ENCODE measurements at regions of chr10 and their contacts with region 1.

Region 1: DNA sequence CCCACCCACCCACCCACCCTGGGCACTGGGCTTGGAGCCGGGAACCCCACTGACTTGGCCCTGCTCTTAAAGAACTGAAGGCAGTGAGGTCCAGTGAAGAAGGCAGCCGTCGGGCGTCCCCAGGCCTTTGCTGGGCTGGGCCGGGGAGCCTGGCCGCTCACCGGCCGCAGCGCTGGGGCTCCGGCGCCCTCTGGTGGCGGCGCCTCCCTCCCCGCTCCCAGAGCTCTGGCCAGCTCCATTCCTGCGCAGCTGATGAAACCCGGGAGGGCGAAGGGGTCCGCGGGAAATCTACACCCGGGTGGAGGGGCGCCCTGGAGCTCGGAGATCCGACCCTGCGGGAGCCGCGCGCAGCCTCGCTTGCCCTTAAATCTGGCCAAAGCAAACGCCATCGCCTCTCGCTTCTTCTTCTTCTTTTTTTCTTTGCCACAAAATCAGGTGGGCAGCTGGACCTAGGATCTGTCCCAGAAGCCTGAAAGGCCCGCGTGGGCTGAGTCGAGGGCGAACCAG is 1.7 kb upstream of the CXCL12 start:
- DNase-seq: peak; percentile 14
- H3K4me3 ChIP-seq: no peak overlapping the region
- H3K27ac ChIP-seq: no peak overlapping the region
- H3K4me1 ChIP-seq: no peaks in the 10 kb centered on the region
- H3K27me3 ChIP-seq: peaks cover 7% of the 10 kb centered on the region
- CTCF ChIP-seq: peak; percentile 24 to 72

Region 2: DNA sequence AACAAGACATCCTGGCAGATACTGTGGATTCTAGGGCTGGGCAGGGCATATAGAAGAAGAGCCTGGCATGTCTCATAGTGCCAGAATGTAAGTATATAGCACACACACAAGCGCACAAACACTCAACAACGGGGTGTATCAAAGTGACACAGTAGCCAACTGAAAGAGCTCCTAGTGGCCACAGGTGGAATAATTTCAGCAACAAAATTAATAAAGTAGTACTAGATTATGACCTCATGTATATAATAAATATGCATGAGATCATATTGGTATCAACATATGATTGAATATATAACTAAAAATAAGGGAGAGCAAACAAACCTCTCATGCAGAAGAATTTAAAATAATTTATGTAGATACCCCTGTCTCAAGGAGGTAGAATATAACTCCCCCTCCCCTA is 70.7 kb after region 1 on chr10:
- CTCF ChIA-PET with region 1: no interaction called
- dilution Hi-C with region 1: no loop called
- in situ Hi-C with region 1: no loop called
- intact Hi-C with region 1: no loop called
- DNase-seq: no peak
- H3K4me3 ChIP-seq: no peak overlapping the region
- H3K27ac ChIP-seq: no peak overlapping the region
- H3K4me1 ChIP-seq: no peaks in the 10 kb centered on the region
- H3K27me3 ChIP-seq: no peaks in the 10 kb centered on the region
- CTCF ChIP-seq: no peak

Region 3: DNA sequence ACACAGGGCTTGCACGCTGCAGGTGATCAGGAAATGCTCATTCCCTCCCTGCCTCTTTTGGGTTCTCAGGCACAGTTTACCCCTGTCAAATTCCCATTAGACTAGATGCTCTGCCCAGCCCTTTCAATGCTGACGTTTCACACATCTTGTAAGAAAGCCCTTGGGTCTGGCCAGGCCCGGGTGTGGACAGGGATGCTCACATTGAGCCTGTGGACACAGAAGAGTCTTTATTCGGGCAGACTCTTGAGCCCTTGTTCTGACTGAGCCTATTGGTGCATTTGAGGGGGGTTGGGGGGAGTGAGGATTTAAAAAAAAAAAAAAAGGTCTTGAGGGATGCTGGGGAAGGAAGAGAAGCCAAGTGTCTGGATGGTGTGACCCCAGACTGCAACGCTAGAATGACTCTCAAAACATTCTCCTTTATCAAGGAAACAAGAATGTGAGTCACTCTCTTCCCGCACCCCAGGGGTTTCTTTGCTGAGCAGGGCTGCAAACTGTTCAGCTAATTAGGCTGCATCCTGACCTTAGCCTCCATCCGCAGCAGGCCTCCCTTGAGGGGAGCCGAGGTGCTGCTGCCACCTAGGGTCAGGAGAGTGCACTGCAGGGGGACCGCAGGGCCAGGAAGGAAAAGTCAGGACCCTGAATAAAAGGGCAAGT is 470.9 kb after region 1 on chr10:
- CTCF ChIA-PET with region 1: no interaction called
- dilution Hi-C with region 1: no loop called
- in situ Hi-C with region 1: no loop called
- intact Hi-C with region 1: loop called (anchors 2 kb)
- DNase-seq: peak; percentile 14
- H3K4me3 ChIP-seq: no peak overlapping the region
- H3K27ac ChIP-seq: no peak overlapping the region
- H3K4me1 ChIP-seq: no peaks in the 10 kb centered on the region
- H3K27me3 ChIP-seq: no peaks in the 10 kb centered on the region
- CTCF ChIP-seq: peak; percentile 95 to 98

Region 4: GRCh38 chr10:44864637-44865288 is 478.2 kb after region 1 on chr10:
- CTCF ChIA-PET with region 1: no interaction called
- dilution Hi-C with region 1: no loop called
- in situ Hi-C with region 1: no loop called
- intact Hi-C with region 1: loop called (anchors 2 kb)
- DNase-seq: peak; percentile 69
- H3K4me3 ChIP-seq: peak overlapping the region; percentile 24 to 62 (median 58)
- H3K27ac ChIP-seq: no peak overlapping the region
- H3K4me1 ChIP-seq: peaks cover 15% of the 10 kb centered on the region
- H3K27me3 ChIP-seq: no peaks in the 10 kb centered on the region
- CTCF ChIP-seq: peak; percentile 78 to 93